ENCODE measurements at regions of chr6 and their contacts with region 1.

Region 1: DNA sequence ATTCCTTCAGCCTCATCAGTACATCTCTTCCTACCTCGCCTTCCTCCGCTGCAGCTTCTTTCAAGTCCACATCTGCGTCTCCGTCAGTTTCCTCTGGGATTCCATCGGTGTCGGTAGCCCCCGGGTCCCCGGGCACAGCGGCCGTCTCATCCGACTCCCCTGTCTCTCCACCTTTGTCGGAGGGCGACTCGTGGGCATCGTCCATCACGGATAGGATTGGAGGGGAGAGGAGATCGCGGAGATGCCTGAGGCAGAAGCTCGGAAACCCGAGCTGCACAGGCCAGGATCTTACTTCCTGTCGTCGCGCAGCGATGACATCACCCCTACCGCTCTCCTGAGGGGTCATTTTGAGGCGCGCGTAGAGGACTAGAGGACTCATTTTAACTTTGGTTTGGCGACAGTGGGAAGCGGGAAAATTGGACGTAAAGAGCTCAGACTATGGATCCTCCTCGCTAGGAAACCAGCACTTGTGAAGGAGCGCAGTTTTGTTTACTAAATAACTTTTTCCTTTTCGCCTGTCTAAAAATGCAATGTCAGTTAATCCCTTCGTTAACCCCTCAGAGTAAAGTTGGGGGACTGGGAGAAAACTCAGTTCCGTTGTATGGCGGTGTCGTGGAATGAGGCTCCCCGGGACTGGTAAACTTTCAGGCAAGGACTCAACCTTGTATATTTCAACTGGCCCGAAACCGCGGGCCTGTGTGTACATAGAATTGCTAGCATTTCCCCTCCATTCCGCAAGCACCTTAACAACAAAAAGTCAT is at the start of gene TAF11:
- DNase-seq: peak; percentile 94
- H3K4me3 ChIP-seq: peak within 1 kb of the TSS; percentile 97
- H3K27ac ChIP-seq: peak within 1 kb of the TSS; percentile 47
- H3K4me1 ChIP-seq: peaks cover 23% of the 10 kb centered on the region
- CTCF ChIP-seq: no peak
- total RNA-seq, gene TAF11: 30.1 and 30.3 TPM in 2 replicates

Region 2: GRCh38 chr6:34757687-34758274 is 130.2 kb before region 1 on chr6:
- CTCF ChIA-PET with region 1: no interaction called
- POLR2A ChIA-PET with region 1: interaction called, 3 read pairs
- intact Hi-C with region 1: loop called (anchors 5 kb)
- DNase-seq: no peak
- H3K4me3 ChIP-seq: peak overlapping the region; percentile 82
- H3K27ac ChIP-seq: peak overlapping the region; percentile 79
- H3K4me1 ChIP-seq: peaks cover 28% of the 10 kb centered on the region
- CTCF ChIP-seq: no peak